ENCODE measurements at regions of chr6 and their contacts with region 1.

Region 1: GRCh38 chr6:8131256-8131897 is 29.0 kb upstream of the EEF1E1 start:
- DNase-seq: peak in 4 of 10 donors; percentile 6 to 50 (median 24)
- H3K4me3 ChIP-seq: no peak overlapping the region
- H3K27ac ChIP-seq: no peak overlapping the region
- H3K27me3 ChIP-seq: peaks cover 0 to 22% (median 0%) of the 10 kb centered on the region in 45 donors
- CTCF ChIP-seq: peak in 55 of 56 donors; percentile 30 to 83 (median 61)

Region 2: DNA sequence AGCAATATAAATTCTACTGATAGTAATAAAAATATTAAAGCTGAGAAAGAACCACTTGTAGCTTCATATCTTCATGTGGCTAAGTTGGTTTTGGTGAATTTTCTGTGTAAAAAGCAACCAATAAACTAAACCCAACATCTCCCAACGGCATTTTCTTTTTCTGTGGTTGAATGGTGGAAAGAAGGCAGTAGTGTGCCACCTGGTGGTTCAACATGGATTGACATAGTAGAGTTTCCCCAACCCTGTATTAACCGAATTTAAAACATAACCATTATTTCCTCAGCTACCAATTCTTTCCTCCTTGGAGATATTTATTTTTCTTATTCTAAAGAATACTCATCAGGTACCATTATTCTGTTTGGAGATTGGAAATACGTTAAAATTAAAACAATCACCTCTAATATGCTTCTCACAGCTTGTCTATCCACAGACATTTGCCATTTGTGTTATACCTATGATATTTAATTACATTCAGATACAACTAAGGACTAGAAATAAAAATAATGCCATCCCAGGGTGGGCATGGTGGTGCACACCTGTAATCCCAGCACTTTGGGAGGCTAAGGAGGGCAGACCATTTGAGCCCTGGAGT is 88.1 kb after region 1 on chr6:
- intact Hi-C with region 1: loop called (anchors 2 to 10 kb)
- DNase-seq: peak in 3 of 10 donors; percentile 13 to 22 (median 16)
- H3K4me3 ChIP-seq: peak overlapping the region in 15 of 59 donors; percentile 3 to 41 (median 24)
- H3K27ac ChIP-seq: no peak overlapping the region
- H3K27me3 ChIP-seq: peaks cover 0 to 6% (median 0%) of the 10 kb centered on the region in 45 donors
- CTCF ChIP-seq: peak; percentile 61 to 94 (median 84)

Measured in dorsolateral prefrontal cortex (tissue), 120 donors.